HCT116 (cell line): ENCODE measurements at regions of chr1 and their contacts with region 1.

Region 1: DNA sequence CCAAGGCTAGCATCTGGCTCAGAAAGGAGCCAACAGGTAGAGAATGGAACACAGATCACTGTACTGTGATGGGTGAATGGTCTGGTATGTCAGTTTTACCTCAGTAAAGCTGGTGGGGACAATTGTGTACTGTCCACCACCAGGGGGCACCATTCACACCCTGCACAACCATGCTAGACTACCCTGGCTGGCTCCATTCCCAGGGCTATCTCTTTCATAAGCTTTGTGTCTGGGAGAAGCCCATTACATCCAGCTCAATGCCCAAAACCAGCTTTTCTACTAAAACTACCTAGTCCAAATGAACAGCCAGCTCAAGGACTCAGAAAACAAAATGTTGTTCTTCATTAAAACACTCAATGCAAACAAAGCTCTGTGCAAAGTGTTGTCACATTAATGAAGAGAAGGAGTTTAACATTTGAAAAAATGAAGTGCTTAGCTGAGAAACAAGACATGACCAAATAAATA is 62.0 kb upstream of the RASAL2 start:
- DNase-seq: peak; percentile 66
- ATAC-seq: peak; percentile 98
- H3K4me3 ChIP-seq: no peak overlapping the region
- H3K27ac ChIP-seq: no peak overlapping the region
- H3K4me1 ChIP-seq: peaks cover 0 to 4% of the 10 kb centered on the region in 2 experiments; a peak in 1 of 4 replicates
- H3K27me3 ChIP-seq: no peaks in the 10 kb centered on the region
- CTCF ChIP-seq: peak; percentile 67 to 93 (median 86); a peak in 5 of 6 replicates
- POLR2A ChIP-seq: no peak
- RAD21 ChIP-seq: peak; percentile 86

Region 2: GRCh38 chr1:178071811-178072210 is 39.9 kb after region 1 on chr1:
- CTCF ChIA-PET with region 1: no interaction called
- POLR2A ChIA-PET with region 1: no interaction called
- RAD21 ChIA-PET with region 1: no interaction called
- intact Hi-C with region 1: no loop called
- DNase-seq: no peak
- ATAC-seq: no peak
- H3K4me3 ChIP-seq: no peak overlapping the region
- H3K27ac ChIP-seq: no peak overlapping the region
- H3K4me1 ChIP-seq: no peaks in the 10 kb centered on the region
- H3K27me3 ChIP-seq: no peaks in the 10 kb centered on the region
- CTCF ChIP-seq: no peak
- POLR2A ChIP-seq: no peak
- RAD21 ChIP-seq: no peak

Region 3: DNA sequence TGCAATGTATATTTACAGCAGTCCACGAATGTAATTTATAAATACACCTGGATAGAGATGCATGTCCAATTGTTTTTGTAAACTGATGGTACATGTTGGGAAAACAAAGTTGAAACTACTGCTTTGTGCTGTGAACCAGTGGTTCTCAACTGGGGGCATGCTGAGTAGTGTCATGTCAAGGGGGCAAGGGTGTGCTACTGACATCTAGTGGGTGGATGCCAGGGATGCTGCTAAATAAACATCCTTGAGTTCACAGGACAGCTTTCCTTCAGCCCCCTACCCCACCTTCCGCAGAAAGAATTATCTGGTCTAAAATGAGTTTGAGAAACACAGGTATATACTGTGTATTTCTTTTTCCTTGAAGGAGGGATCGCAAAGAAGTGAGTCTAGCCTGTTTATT is 157.9 kb after region 1 on chr1:
- CTCF ChIA-PET with region 1: interaction called, 8 read pairs
- POLR2A ChIA-PET with region 1: no interaction called
- RAD21 ChIA-PET with region 1: no interaction called
- intact Hi-C with region 1: loop called (anchors 2 kb)
- DNase-seq: peak; percentile 13
- ATAC-seq: peak; percentile 82
- H3K4me3 ChIP-seq: no peak overlapping the region
- H3K27ac ChIP-seq: no peak overlapping the region
- H3K4me1 ChIP-seq: peaks cover 0 to 4% of the 10 kb centered on the region in 2 experiments; a peak in 2 of 4 replicates
- H3K27me3 ChIP-seq: no peaks in the 10 kb centered on the region
- CTCF ChIP-seq: peak; percentile 57 to 73 (median 70); a peak in 5 of 6 replicates
- POLR2A ChIP-seq: no peak
- RAD21 ChIP-seq: peak; percentile 69